HEK293 (cell line): ENCODE measurements at regions of chr17 and their contacts with region 1.

Region 1: GRCh38 chr17:32006957-32007462 is at the start of gene LRRC37B:
- H3K4me3 ChIP-seq: peak within 1 kb of the TSS; percentile 52
- H3K27ac ChIP-seq: peak within 1 kb of the TSS; percentile 85
- H3K4me1 ChIP-seq: no peaks in the 10 kb centered on the region
- CTCF ChIP-seq: peak; percentile 98

Region 2: GRCh38 chr17:31997005-31997404 is 10.0 kb before region 1 on chr17:
- CTCF ChIA-PET with region 1: interaction called, 15 read pairs
- POLR2A ChIA-PET with region 1: no interaction called
- H3K4me3 ChIP-seq: no peak overlapping the region
- H3K27ac ChIP-seq: no peak overlapping the region
- H3K4me1 ChIP-seq: no peaks in the 10 kb centered on the region
- CTCF ChIP-seq: no peak

Region 3: GRCh38 chr17:32142038-32142856 is 135.2 kb after region 1 on chr17 and contains the start of gene RHOT1:
- CTCF ChIA-PET with region 1: interaction called, 36 read pairs
- POLR2A ChIA-PET with region 1: no interaction called
- H3K4me3 ChIP-seq: peak within 1 kb of the TSS; percentile 98
- H3K27ac ChIP-seq: peak within 1 kb of the TSS; percentile 96
- H3K4me1 ChIP-seq: peaks cover 5% of the 10 kb centered on the region; the same call in 1 of the 2 replicates
- CTCF ChIP-seq: peak; percentile 66; the same call in 1 of the 2 replicates